HCT116 (cell line): ENCODE measurements at regions of chr17 and their contacts with region 1.

Region 1: DNA sequence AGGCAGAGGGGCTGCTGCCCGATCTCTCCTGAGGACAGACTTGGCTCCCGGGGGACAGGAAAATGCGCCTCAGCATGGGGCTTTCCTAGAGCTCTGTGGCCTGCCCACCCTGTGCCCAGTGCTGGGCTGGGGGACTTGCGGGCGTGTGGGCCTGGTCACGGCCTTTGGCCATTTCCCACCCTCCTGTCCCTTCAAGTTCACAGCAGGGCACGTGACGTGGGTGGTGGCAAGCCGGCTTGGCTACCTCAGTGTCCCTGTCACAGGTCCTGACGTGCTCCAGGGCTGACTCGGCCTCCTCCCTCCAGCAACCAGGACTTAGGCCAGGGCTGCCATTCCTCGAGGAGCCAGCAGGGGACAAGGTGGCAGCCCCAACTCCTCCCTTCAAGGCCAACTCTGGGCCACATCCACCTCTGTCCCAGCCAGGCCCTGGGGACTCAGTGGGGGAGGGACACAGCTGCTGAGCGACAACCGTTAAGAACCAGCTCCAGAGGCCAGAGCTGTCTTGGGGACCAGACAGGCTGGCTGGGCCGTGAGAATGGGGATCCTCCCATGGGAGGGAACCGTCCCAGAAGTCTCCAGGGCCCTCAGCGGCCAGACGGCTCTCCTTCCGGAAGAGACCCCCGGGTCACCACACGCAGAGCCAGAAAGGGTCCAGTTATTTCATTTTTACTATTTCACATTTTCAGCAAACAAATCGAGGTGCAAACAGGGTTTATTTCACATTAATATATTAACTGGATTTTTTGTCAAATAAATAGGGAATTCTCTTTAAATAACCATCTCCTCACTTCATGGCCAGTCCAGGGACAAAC is 1.1 kb upstream of the UNC13D start:
- DNase-seq: peak; percentile 96
- ATAC-seq: peak; percentile 86
- H3K4me3 ChIP-seq: peak overlapping the region; percentile 46 to 57
- H3K27ac ChIP-seq: peak overlapping the region; percentile 88
- H3K4me1 ChIP-seq: peaks cover 33 to 63% of the 10 kb centered on the region in 2 experiments
- H3K27me3 ChIP-seq: no peaks in the 10 kb centered on the region
- CTCF ChIP-seq: peak in 2 of 3 experiments; percentile 96 to 98; a peak in 5 of 6 replicates
- POLR2A ChIP-seq: no peak
- RAD21 ChIP-seq: no peak

Region 2: GRCh38 chr17:75753514-75754377 is 91.5 kb before region 1 on chr17:
- CTCF ChIA-PET with region 1: no interaction called
- POLR2A ChIA-PET with region 1: no interaction called
- RAD21 ChIA-PET with region 1: no interaction called
- intact Hi-C with region 1: no loop called
- DNase-seq: no peak
- ATAC-seq: no peak
- H3K4me3 ChIP-seq: no peak overlapping the region
- H3K27ac ChIP-seq: peak overlapping the region; percentile 26; the same call in 1 of the 2 replicates
- H3K4me1 ChIP-seq: peaks cover 0 to 3% of the 10 kb centered on the region in 2 experiments; a peak in 1 of 4 replicates
- H3K27me3 ChIP-seq: no peaks in the 10 kb centered on the region
- CTCF ChIP-seq: no peak
- POLR2A ChIP-seq: no peak
- RAD21 ChIP-seq: no peak

Region 3: GRCh38 chr17:75784473-75785015 is 60.7 kb before region 1 on chr17 and contains the start of gene UNK:
- CTCF ChIA-PET with region 1: interaction called, 11 read pairs
- POLR2A ChIA-PET with region 1: interaction called, 26 read pairs
- RAD21 ChIA-PET with region 1: interaction called in 1 of 2 experiments, 4 read pairs
- intact Hi-C with region 1: loop called (anchors 2 kb)
- DNase-seq: peak; percentile 100
- ATAC-seq: peak; percentile 78
- H3K4me3 ChIP-seq: peak within 1 kb of the TSS; percentile 55 to 71
- H3K27ac ChIP-seq: peak within 1 kb of the TSS; percentile 99
- H3K4me1 ChIP-seq: peaks cover 40 to 65% of the 10 kb centered on the region in 2 experiments
- H3K27me3 ChIP-seq: no peaks in the 10 kb centered on the region
- CTCF ChIP-seq: no peak
- POLR2A ChIP-seq: no peak
- RAD21 ChIP-seq: no peak
- total RNA-seq, gene UNK: 40.6 TPM

Region 4: GRCh38 chr17:75827252-75828115 is 17.8 kb before region 1 on chr17:
- CTCF ChIA-PET with region 1: interaction called, 15 read pairs
- POLR2A ChIA-PET with region 1: interaction called, 5 read pairs
- RAD21 ChIA-PET with region 1: no interaction called
- intact Hi-C with region 1: no loop called
- DNase-seq: no peak
- ATAC-seq: peak; percentile 84
- H3K4me3 ChIP-seq: no peak overlapping the region
- H3K27ac ChIP-seq: peak overlapping the region; percentile 27; the same call in 1 of the 2 replicates
- H3K4me1 ChIP-seq: peaks cover 6 to 8% of the 10 kb centered on the region in 2 experiments; a peak in 2 of 4 replicates
- H3K27me3 ChIP-seq: no peaks in the 10 kb centered on the region
- CTCF ChIP-seq: peak; percentile 70 to 91 (median 87)
- POLR2A ChIP-seq: no peak
- RAD21 ChIP-seq: peak; percentile 57

Region 5: DNA sequence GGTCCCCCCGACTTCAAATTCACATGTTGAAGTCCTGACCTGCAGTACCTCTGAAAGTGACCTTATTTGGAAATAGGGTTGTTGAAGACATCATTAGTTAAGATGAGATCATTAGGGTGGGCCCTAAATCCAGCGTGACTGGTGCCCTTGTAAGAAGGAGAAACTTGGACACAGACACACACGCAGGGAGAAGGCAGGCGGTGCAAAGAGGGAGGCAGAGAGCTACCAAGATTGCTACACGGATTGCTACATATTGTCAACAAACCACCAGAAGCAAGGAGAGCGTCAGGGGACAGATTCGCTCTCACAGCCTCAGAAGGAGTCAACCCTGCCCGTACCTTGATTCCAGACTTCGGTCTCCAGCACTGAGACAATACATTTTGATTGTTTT is 16.7 kb after region 1 on chr17:
- CTCF ChIA-PET with region 1: interaction called, 46 read pairs
- POLR2A ChIA-PET with region 1: interaction called, 5 read pairs
- RAD21 ChIA-PET with region 1: no interaction called
- intact Hi-C with region 1: no loop called
- DNase-seq: no peak
- ATAC-seq: no peak
- H3K4me3 ChIP-seq: no peak overlapping the region
- H3K27ac ChIP-seq: no peak overlapping the region; the same call in 1 of the 2 replicates
- H3K4me1 ChIP-seq: peaks cover 20 to 36% of the 10 kb centered on the region in 2 experiments; a peak in 3 of 4 replicates
- H3K27me3 ChIP-seq: no peaks in the 10 kb centered on the region
- CTCF ChIP-seq: no peak
- POLR2A ChIP-seq: no peak
- RAD21 ChIP-seq: no peak